H1 (cell line): ENCODE measurements at regions of chr7 and their contacts with region 1.

Region 1: GRCh38 chr7:116953727-116954442 is 584 bp downstream of the ST7 start:
- DNase-seq: peak; percentile 64 to 74
- H3K4me3 ChIP-seq: peak overlapping the region; percentile 80 to 97 (median 89)
- H3K27ac ChIP-seq: peak overlapping the region; percentile 94
- H3K4me1 ChIP-seq: peaks cover 0 to 12% (median 6%) of the 10 kb centered on the region in 4 experiments; a peak in 3 of 7 replicates
- H3K27me3 ChIP-seq: no peaks in the 10 kb centered on the region
- CTCF ChIP-seq: peak in 1 of 3 experiments; percentile 13; a peak in 1 of 4 replicates
- EP300 ChIP-seq: no peak
- POLR2A ChIP-seq: no peak; a peak in 1 of 3 replicates
- RAD21 ChIP-seq: no peak

Region 2: DNA sequence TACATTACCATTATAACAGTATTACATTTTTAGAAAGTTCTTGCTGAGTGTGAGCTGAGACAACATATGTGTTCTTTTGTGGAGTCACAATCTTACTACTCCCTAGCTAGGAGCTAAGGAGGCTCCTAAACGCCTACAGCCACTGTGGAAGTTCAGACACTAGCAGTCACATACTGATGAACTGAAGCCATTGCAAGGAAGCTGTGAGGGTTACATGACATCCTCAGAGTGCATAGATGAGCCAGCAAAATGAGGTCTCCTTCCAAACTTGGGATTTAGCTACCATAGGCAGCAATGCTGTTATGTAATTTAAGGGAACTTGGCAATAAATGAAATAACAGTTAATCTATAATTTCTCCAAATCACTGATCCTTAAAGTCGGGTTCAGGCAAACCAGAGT is 11.4 kb before region 1 on chr7:
- CTCF ChIA-PET with region 1: interaction called, 3 read pairs
- POLR2A ChIA-PET with region 1: interaction called, 10 read pairs
- DNase-seq: no peak
- H3K4me3 ChIP-seq: no peak overlapping the region
- H3K27ac ChIP-seq: no peak overlapping the region
- H3K4me1 ChIP-seq: peaks cover 0 to 4% (median 0%) of the 10 kb centered on the region in 4 experiments; a peak in 1 of 7 replicates
- H3K27me3 ChIP-seq: no peaks in the 10 kb centered on the region
- CTCF ChIP-seq: no peak
- EP300 ChIP-seq: no peak
- POLR2A ChIP-seq: no peak
- RAD21 ChIP-seq: no peak

Region 3: DNA sequence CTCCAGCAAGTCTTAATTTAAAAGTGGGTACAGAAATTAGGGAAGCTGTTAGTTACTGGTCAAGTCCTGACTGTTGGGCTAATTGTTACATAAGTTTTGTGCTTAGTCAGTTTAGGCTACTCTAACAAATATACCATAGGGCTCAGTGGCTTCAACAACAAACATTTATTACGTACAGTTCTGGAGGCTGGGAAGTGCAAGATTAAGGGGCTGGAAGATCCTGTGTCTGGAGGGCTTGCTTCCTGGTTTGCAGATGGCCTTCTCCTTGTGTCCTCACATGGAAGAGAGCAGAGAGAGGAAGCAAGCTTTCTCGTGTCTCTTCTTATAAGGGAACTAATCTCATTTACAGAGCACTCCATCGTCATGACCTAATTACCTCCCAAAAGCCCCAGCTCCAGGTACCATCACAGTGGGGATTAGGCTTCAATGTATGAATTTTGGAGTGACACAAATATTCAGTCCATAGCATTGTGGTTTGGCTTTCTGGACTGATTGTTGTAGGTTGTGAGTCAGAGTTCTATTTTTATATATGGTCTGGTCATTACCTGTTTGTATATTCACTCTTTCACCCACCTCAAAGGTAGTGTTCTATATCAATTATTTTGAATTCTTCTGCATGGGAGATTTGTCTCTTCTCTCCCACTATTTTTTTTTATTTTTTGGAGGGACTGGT is 16.5 kb after region 1 on chr7:
- CTCF ChIA-PET with region 1: interaction called, 8 read pairs
- POLR2A ChIA-PET with region 1: interaction called, 34 read pairs
- DNase-seq: no peak
- H3K4me3 ChIP-seq: no peak overlapping the region
- H3K27ac ChIP-seq: peak overlapping the region; percentile 51; the same call in 1 of the 2 replicates
- H3K4me1 ChIP-seq: peaks cover 4 to 18% (median 12%) of the 10 kb centered on the region in 4 experiments; a peak in 4 of 7 replicates
- H3K27me3 ChIP-seq: no peaks in the 10 kb centered on the region
- CTCF ChIP-seq: no peak
- EP300 ChIP-seq: no peak
- POLR2A ChIP-seq: no peak
- RAD21 ChIP-seq: no peak

Region 4: DNA sequence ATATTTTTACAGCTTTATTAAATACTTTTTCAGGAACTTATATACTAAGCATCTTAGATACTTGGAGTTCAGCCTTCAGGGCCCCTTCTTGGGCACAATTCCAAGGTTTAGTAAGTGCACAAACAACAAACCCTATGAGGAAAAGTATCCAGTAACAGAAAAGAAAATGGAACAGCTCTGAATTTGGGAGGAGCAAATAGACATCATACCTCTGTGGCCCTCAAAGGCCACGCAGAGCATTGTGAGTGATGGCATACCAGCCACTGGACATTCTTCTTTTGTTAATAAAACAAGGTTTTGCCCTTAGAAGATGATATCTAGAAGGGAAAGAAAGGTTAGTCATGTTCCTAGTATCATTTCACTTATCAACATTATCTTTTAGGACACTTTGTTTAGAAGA is 45.4 kb after region 1 on chr7:
- CTCF ChIA-PET with region 1: no interaction called
- POLR2A ChIA-PET with region 1: no interaction called
- DNase-seq: no peak
- H3K4me3 ChIP-seq: no peak overlapping the region
- H3K27ac ChIP-seq: no peak overlapping the region
- H3K4me1 ChIP-seq: no peaks in the 10 kb centered on the region; a peak in 1 of 7 replicates
- H3K27me3 ChIP-seq: no peaks in the 10 kb centered on the region
- CTCF ChIP-seq: no peak
- EP300 ChIP-seq: no peak
- POLR2A ChIP-seq: no peak
- RAD21 ChIP-seq: no peak

Region 5: GRCh38 chr7:117014673-117015133 is 60.8 kb after region 1 on chr7:
- CTCF ChIA-PET with region 1: interaction called, 10 read pairs
- POLR2A ChIA-PET with region 1: interaction called, 3 read pairs
- DNase-seq: no peak
- H3K4me3 ChIP-seq: no peak overlapping the region
- H3K27ac ChIP-seq: no peak overlapping the region
- H3K4me1 ChIP-seq: no peaks in the 10 kb centered on the region; a peak in 2 of 7 replicates
- H3K27me3 ChIP-seq: no peaks in the 10 kb centered on the region
- CTCF ChIP-seq: no peak
- EP300 ChIP-seq: no peak
- POLR2A ChIP-seq: no peak
- RAD21 ChIP-seq: no peak